ENCODE measurements at regions of chr17 and their contacts with region 1.

Region 1: GRCh38 chr17:63773381-63774140 is at the start of gene CCDC47:
- DNase-seq: peak; percentile 100
- H3K4me3 ChIP-seq: peak within 1 kb of the TSS; percentile 88 to 95 (median 94)
- H3K27ac ChIP-seq: peak within 1 kb of the TSS; percentile 97
- H3K4me1 ChIP-seq: peaks cover 6% of the 10 kb centered on the region
- H3K27me3 ChIP-seq: no peaks in the 10 kb centered on the region
- CTCF ChIP-seq: no peak
- total RNA-seq, gene CCDC47: 60.5 to 74.7 TPM

Region 2: GRCh38 chr17:63741221-63742049 is 32.1 kb before region 1 on chr17 and contains the start of gene STRADA:
- CTCF ChIA-PET with region 1: no interaction called
- dilution Hi-C with region 1: no loop called
- in situ Hi-C with region 1: no loop called
- intact Hi-C with region 1: loop called (anchors 1 kb)
- DNase-seq: peak; percentile 99
- H3K4me3 ChIP-seq: peak within 1 kb of the TSS; percentile 71 to 89 (median 80)
- H3K27ac ChIP-seq: peak within 1 kb of the TSS; percentile 85
- H3K4me1 ChIP-seq: peaks cover 18% of the 10 kb centered on the region
- H3K27me3 ChIP-seq: no peaks in the 10 kb centered on the region
- CTCF ChIP-seq: no peak
- total RNA-seq, gene STRADA: 34.3 to 38.9 TPM

Region 3: DNA sequence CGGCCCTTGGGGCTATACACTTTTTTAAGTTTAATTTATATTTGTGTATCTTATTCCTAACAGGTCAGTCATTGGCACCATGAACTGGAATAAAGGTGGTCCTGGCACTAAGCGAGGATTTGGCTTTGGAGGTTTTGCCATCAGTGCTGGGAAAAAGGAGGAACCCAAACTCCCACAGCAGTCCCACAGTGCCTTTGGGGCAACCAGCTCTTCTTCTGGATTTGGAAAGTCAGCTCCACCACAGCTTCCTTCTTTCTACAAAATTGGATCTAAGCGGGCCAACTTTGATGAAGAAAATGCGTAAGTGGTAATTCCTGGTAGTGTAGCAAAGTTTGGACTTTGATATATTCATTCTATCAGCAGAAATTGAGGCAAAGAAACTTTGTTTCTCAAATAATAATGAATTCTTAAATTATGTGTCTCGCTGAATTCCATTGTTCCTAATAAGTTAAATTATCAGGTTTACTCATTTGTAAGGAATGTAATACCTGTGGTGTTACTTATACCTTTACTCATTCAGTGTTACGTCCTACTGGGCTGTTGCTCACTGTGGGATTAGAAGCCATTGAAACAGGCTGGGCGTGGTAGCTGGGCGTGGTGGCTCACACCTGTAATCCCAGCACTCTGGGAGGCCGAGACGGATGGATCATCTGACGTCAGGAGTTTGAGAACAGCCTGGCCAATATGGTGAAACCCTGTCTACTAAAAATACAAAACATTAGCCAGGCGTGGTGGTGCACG is 13.6 kb after region 1 on chr17:
- CTCF ChIA-PET with region 1: no interaction called
- dilution Hi-C with region 1: no loop called
- in situ Hi-C with region 1: no loop called
- intact Hi-C with region 1: loop called (anchors 1 kb)
- DNase-seq: peak; percentile 94
- H3K4me3 ChIP-seq: no peak overlapping the region
- H3K27ac ChIP-seq: peak overlapping the region; percentile 99
- H3K4me1 ChIP-seq: peaks cover 39% of the 10 kb centered on the region
- H3K27me3 ChIP-seq: no peaks in the 10 kb centered on the region
- CTCF ChIP-seq: no peak

Region 4: GRCh38 chr17:63827002-63827771 is 53.6 kb after region 1 on chr17 and contains the starts of genes FTSJ3 and PSMC5:
- CTCF ChIA-PET with region 1: no interaction called
- dilution Hi-C with region 1: no loop called
- in situ Hi-C with region 1: no loop called
- intact Hi-C with region 1: loop called (anchors 1 kb)
- DNase-seq: peak; percentile 95
- H3K4me3 ChIP-seq: peak within 1 kb of the TSS; percentile 68 to 88 (median 83)
- H3K27ac ChIP-seq: peak within 1 kb of the TSS; percentile 83
- H3K4me1 ChIP-seq: peaks cover 18% of the 10 kb centered on the region
- H3K27me3 ChIP-seq: no peaks in the 10 kb centered on the region
- CTCF ChIP-seq: peak; percentile 30 to 51
- total RNA-seq, gene FTSJ3: 39.5 to 49.0 TPM
- total RNA-seq, gene PSMC5: 44.8 to 132 TPM

Measured in mammary epithelial cell (primary cell).